Left ventricle myocardium inferior (tissue), 1 donor: ENCODE measurements at regions of chr4 and their contacts with region 1.

Region 1: GRCh38 chr4:81351654-81352445 is 119.9 kb downstream of the RASGEF1B start:
- DNase-seq: peak; percentile 55
- H3K4me3 ChIP-seq: no peak overlapping the region
- H3K27ac ChIP-seq: no peak overlapping the region
- H3K4me1 ChIP-seq: no peaks in the 10 kb centered on the region
- H3K27me3 ChIP-seq: peaks cover 6% of the 10 kb centered on the region
- CTCF ChIP-seq: peak; percentile 89

Region 2: GRCh38 chr4:80740375-80740774 is 611.5 kb before region 1 on chr4:
- intact Hi-C with region 1: no loop called
- DNase-seq: no peak
- H3K4me3 ChIP-seq: no peak overlapping the region
- H3K27ac ChIP-seq: no peak overlapping the region
- H3K4me1 ChIP-seq: no peaks in the 10 kb centered on the region
- H3K27me3 ChIP-seq: no peaks in the 10 kb centered on the region
- CTCF ChIP-seq: no peak

Region 3: DNA sequence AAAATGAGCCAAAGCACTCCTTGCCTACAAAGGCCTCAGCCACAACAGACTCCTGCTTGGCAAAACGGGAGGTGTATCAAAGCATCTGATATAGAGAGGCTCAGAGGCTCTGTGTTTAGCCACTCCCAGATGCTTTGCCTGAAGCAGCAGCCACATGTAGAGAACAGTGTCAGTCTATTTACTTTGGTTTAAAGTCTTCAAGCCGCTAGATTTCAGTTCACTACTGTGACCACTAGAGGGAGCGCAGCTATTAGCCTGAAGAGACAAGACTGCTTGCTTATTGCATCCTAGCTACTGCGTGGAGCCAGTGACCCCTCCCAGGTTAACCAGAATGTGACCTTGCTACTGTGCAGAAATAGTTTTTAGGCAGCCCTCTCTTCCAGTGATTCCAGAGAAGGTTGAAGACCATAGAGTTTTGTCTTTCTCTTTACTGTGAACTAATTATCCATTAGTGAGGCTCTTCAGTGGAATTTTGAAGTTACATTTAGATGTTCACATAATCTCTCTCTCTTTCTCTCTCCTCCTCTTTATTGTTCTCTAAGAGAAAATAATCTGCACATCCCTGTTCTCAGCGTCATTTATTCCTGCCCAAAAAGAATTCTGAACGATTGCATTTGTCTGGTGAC is 282.0 kb before region 1 on chr4:
- intact Hi-C with region 1: loop called (anchors 5 kb)
- DNase-seq: peak; percentile 10
- H3K4me3 ChIP-seq: no peak overlapping the region
- H3K27ac ChIP-seq: no peak overlapping the region
- H3K4me1 ChIP-seq: no peaks in the 10 kb centered on the region
- H3K27me3 ChIP-seq: peaks cover 8% of the 10 kb centered on the region
- CTCF ChIP-seq: peak; percentile 95

Region 4: GRCh38 chr4:81860111-81860510 is 508.3 kb after region 1 on chr4:
- intact Hi-C with region 1: no loop called
- DNase-seq: no peak
- H3K4me3 ChIP-seq: no peak overlapping the region
- H3K27ac ChIP-seq: no peak overlapping the region
- H3K4me1 ChIP-seq: no peaks in the 10 kb centered on the region
- H3K27me3 ChIP-seq: no peaks in the 10 kb centered on the region
- CTCF ChIP-seq: no peak

Region 5: GRCh38 chr4:82171531-82172155 is 819.8 kb after region 1 on chr4:
- intact Hi-C with region 1: no loop called
- DNase-seq: no peak
- H3K4me3 ChIP-seq: no peak overlapping the region
- H3K27ac ChIP-seq: no peak overlapping the region
- H3K4me1 ChIP-seq: no peaks in the 10 kb centered on the region
- H3K27me3 ChIP-seq: no peaks in the 10 kb centered on the region
- CTCF ChIP-seq: no peak